Caco-2 (cell line): ENCODE measurements at regions of chr6 and their contacts with region 1.

Region 1: GRCh38 chr6:119349323-119350042 is at the start of gene MAN1A1:
- DNase-seq: peak; percentile 81 to 91
- H3K4me3 ChIP-seq: peak within 1 kb of the TSS; percentile 81
- H3K4me3 Mint-ChIP-seq: peak within 1 kb of the TSS; percentile 81
- H3K27ac Mint-ChIP-seq: peak within 1 kb of the TSS; percentile 80
- H3K4me1 ChIP-seq: peaks cover 12% of the 10 kb centered on the region
- H3K4me1 Mint-ChIP-seq: peaks cover 6% of the 10 kb centered on the region
- H3K27me3 ChIP-seq: no peaks in the 10 kb centered on the region
- H3K27me3 Mint-ChIP-seq: peaks cover 8% of the 10 kb centered on the region
- CTCF ChIP-seq: no peak
- total RNA-seq, gene MAN1A1: 28.7 and 28.9 TPM in 2 replicates

Region 2: DNA sequence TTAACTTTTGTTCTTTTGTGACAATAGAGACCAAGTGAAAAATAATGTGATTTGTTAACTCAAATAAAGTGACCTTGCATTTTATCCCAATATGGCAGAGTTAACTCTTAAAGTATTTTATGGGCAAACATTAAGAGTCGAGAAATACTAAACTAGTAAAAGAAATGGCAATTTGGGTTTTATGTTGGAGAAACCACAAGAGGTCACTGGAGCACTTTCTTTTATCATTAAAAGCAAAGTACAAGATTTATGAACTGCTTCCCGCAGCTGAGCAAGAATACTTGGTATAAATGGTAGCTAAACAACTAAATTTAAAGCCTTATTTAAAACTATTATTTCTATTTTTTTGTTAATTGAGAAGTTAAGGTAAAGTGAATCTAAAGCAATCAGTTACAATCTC is 381.1 kb before region 1 on chr6:
- CTCF ChIA-PET with region 1: no interaction called
- POLR2A ChIA-PET with region 1: no interaction called
- intact Hi-C with region 1: loop called (anchors 10 kb)
- DNase-seq: peak in 1 of 2 experiments; percentile 12
- H3K4me3 ChIP-seq: no peak overlapping the region
- H3K4me3 Mint-ChIP-seq: no peak overlapping the region
- H3K27ac Mint-ChIP-seq: no peak overlapping the region
- H3K4me1 ChIP-seq: 0 out of 2 replicates have a peak, but pooled peaks cover 7% of the 10 kb centered on the region
- H3K4me1 Mint-ChIP-seq: no peaks in the 10 kb centered on the region
- H3K27me3 ChIP-seq: no peaks in the 10 kb centered on the region
- H3K27me3 Mint-ChIP-seq: no peaks in the 10 kb centered on the region
- CTCF ChIP-seq: peak; percentile 29 to 35

Region 3: DNA sequence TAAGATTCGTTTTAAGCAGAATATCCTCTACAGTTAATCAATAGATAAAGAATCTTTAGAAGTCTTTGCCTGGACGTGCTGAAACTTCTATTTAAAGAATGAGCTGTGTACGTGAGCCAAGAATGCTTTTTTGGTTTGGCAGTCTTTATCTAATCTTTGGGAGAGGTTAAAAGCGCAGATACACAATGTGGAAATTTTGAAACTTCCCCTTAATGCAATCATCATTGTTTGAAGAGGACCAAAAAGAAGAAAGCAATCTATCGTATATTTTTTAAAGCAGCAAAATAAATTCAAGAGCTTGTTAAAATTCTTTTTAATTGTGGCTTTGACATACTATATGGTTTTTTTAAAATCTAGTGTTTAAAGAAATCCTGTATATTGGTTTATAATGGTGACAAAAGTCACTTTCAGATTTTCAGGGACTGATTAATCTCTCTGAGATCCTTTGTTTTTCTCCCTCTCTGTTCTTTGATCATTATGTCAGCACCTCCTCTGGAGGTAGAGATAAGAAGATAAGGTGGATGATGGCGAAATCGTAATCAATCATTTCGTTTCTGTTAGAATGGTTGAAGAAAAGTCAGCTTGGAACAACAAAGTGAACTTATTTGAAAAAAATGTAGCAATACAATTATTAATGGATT is 178.9 kb before region 1 on chr6:
- CTCF ChIA-PET with region 1: no interaction called
- POLR2A ChIA-PET with region 1: no interaction called
- intact Hi-C with region 1: loop called (anchors 1 kb)
- DNase-seq: peak in 1 of 2 experiments; percentile 71
- H3K4me3 ChIP-seq: no peak overlapping the region
- H3K4me3 Mint-ChIP-seq: peak overlapping the region; percentile 50
- H3K27ac Mint-ChIP-seq: peak overlapping the region; percentile 61
- H3K4me1 ChIP-seq: peaks cover 47% of the 10 kb centered on the region
- H3K4me1 Mint-ChIP-seq: peaks cover 37% of the 10 kb centered on the region
- H3K27me3 ChIP-seq: no peaks in the 10 kb centered on the region
- H3K27me3 Mint-ChIP-seq: no peaks in the 10 kb centered on the region
- CTCF ChIP-seq: no peak

Region 4: GRCh38 chr6:119333707-119334295 is 15.7 kb before region 1 on chr6:
- CTCF ChIA-PET with region 1: interaction called, 3 read pairs
- POLR2A ChIA-PET with region 1: no interaction called
- intact Hi-C with region 1: loop called (anchors 1 kb)
- DNase-seq: peak in 1 of 2 experiments; percentile 35
- H3K4me3 ChIP-seq: no peak overlapping the region
- H3K4me3 Mint-ChIP-seq: no peak overlapping the region
- H3K27ac Mint-ChIP-seq: no peak overlapping the region
- H3K4me1 ChIP-seq: no peaks in the 10 kb centered on the region
- H3K4me1 Mint-ChIP-seq: no peaks in the 10 kb centered on the region
- H3K27me3 ChIP-seq: no peaks in the 10 kb centered on the region
- H3K27me3 Mint-ChIP-seq: no peaks in the 10 kb centered on the region
- CTCF ChIP-seq: peak; percentile 52 to 55

Region 5: DNA sequence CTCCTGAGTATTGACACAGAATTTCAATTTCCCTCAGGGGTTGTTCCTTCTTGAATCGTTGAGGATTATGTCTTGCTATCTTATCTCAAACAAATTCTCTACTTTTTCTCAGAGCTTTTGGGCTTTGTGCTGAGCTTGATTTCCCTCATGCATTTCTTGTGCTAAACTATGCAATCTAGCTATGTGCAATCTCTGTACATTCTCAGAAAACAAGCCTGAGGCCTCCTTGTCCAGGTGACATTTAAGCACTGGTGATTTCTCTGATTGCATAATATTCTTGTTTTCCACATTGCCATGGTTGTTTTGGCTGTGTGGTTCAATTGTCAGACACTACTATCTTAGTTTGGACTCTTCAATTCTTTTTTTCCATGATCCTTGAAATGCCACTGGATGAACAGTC is 81.3 kb after region 1 on chr6:
- CTCF ChIA-PET with region 1: no interaction called
- POLR2A ChIA-PET with region 1: no interaction called
- intact Hi-C with region 1: loop called (anchors 5 kb)
- DNase-seq: peak in 1 of 2 experiments; percentile 6
- H3K4me3 ChIP-seq: no peak overlapping the region
- H3K4me3 Mint-ChIP-seq: no peak overlapping the region
- H3K27ac Mint-ChIP-seq: peak overlapping the region; percentile 6
- H3K4me1 ChIP-seq: no peaks in the 10 kb centered on the region
- H3K4me1 Mint-ChIP-seq: peaks cover 10% of the 10 kb centered on the region
- H3K27me3 ChIP-seq: no peaks in the 10 kb centered on the region
- H3K27me3 Mint-ChIP-seq: no peaks in the 10 kb centered on the region
- CTCF ChIP-seq: no peak

Region 6: DNA sequence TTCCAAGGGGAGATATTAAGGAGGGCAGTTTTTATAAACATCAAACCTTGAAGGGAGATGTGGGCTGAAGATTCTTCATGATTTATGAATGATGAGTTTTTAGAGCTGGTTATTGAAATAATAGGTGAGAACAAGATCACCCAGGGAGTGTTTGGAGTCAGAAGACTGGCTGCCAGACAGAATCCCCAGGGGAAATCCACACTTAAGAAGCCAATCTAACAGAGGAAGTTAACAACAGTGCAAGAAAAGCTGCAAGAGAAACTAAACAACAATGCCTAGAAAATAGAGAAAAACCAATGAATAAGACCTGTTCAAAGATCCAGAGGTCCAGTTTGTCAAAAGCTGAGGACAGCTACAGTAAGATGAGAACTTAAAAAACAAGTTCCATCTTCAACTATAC is 167.9 kb after region 1 on chr6:
- CTCF ChIA-PET with region 1: no interaction called
- POLR2A ChIA-PET with region 1: no interaction called
- intact Hi-C with region 1: loop called (anchors 10 kb)
- DNase-seq: no peak
- H3K4me3 ChIP-seq: no peak overlapping the region
- H3K4me3 Mint-ChIP-seq: no peak overlapping the region
- H3K27ac Mint-ChIP-seq: no peak overlapping the region
- H3K4me1 ChIP-seq: no peaks in the 10 kb centered on the region
- H3K4me1 Mint-ChIP-seq: no peaks in the 10 kb centered on the region
- H3K27me3 ChIP-seq: no peaks in the 10 kb centered on the region
- H3K27me3 Mint-ChIP-seq: peaks cover 10% of the 10 kb centered on the region
- CTCF ChIP-seq: no peak

Region 7: GRCh38 chr6:119620846-119621555 is 271.5 kb after region 1 on chr6:
- CTCF ChIA-PET with region 1: no interaction called
- POLR2A ChIA-PET with region 1: no interaction called
- intact Hi-C with region 1: loop called (anchors 10 kb)
- DNase-seq: no peak
- H3K4me3 ChIP-seq: no peak overlapping the region
- H3K4me3 Mint-ChIP-seq: no peak overlapping the region
- H3K27ac Mint-ChIP-seq: no peak overlapping the region
- H3K4me1 ChIP-seq: no peaks in the 10 kb centered on the region
- H3K4me1 Mint-ChIP-seq: no peaks in the 10 kb centered on the region
- H3K27me3 ChIP-seq: no peaks in the 10 kb centered on the region
- H3K27me3 Mint-ChIP-seq: no peaks in the 10 kb centered on the region
- CTCF ChIP-seq: no peak